ENCODE measurements at regions of chr6 and their contacts with region 1.

Region 1: DNA sequence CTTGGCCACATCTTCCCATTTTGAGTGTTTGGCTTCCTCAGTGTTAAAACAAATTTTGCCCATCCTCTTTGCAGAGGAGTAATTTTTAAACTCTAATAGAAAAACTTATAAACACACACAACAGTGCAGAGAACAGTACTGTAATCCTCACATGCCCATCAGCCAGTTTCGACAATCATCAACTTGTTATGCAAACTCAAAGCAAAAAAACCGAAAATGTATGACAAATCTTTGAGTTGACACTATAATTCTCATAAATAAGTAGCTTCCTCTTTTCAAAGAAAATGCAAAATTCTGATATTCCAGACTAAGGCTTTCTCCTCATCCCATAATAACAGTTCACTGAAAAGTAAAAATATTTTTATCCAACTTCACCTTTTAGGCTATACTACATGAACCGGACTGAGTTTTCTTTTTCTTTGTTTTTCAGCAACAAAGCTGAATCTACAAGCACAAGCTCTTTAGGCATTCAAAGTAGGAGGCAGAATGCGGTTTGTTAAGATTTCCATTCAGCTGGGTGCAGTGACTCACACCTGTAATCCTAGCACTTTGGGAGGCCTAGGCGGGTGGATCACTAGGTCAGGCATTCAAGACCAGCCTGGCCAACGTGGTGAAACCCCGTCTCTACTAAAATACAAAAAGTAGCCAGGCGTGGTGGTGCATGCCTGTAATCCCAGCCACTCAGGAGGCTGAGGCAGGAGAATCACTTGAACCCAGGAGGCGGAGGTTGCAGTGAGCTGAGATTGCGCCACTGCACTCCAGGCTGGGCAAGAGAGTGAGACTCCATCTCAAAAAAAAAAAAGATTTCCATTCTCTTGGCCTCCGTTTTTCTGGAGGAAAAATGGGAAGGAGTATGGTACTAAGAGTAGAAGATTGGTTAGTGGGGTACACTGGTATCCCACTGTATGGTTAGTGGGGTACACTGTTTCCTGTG is 74.8 kb downstream of the GCNT2 start:
- DNase-seq: peak; percentile 74 to 90 (median 88)
- H3K4me3 ChIP-seq: no peak overlapping the region
- H3K4me3 Mint-ChIP-seq: peak overlapping the region in 1 of 2 donors; percentile 53
- H3K27ac ChIP-seq: peak overlapping the region; percentile 86 to 88
- H3K27ac Mint-ChIP-seq: peak overlapping the region; percentile 93 to 99 (median 97)
- H3K4me1 ChIP-seq: peaks cover 54 to 70% of the 10 kb centered on the region in 2 donors
- H3K4me1 Mint-ChIP-seq: peaks cover 63% of the 10 kb centered on the region
- H3K27me3 ChIP-seq: no peaks in the 10 kb centered on the region
- H3K27me3 Mint-ChIP-seq: peaks cover 0 to 1% (median 0%) of the 10 kb centered on the region in 3 donors
- CTCF ChIP-seq: no peak

Region 2: DNA sequence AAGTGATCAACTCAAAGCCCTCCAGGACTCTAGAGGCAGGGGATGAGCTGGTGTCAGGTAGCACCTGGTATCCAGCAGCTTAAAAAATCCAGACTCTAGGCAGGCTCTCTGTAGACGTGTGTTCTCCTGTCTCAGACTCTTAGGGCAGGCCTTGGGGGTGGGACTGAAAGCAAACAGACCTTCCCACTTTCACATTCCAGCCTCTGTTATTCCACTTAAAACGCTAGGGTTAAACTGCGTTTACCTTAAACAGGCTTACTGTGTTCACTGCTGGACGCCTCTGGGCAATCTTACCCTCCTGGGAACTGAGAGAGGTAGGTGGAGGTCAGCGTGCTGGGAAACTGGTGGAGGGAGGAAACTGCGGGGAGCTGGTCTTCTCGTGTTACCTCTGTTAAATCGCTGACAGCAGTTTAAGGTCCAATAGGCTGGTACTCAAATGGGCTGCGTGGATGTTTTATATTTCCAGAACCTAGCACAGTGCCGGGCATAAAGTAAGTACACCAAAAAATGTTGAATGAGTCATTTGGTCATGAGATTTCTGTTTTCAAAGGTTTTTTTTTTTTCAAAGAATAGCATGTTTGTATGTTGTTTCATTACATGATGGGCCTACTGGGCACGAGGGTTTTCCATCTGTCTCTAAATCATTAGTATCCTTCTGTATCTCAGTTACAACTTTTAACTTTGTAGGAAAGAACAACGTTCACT is 74.7 kb before region 1 on chr6 and contains the start of gene GCNT2:
- intact Hi-C with region 1: loop called in 1 of 2 experiments (anchors 5 kb)
- DNase-seq: peak; percentile 32 to 69 (median 58)
- H3K4me3 ChIP-seq: peak within 1 kb of the TSS in 2 of 3 experiments; percentile 32 to 64
- H3K4me3 Mint-ChIP-seq: peak within 1 kb of the TSS; percentile 70 to 81
- H3K27ac ChIP-seq: peak within 1 kb of the TSS; percentile 81 to 84
- H3K27ac Mint-ChIP-seq: peak within 1 kb of the TSS; percentile 92 to 99 (median 94)
- H3K4me1 ChIP-seq: peaks cover 53 to 69% of the 10 kb centered on the region in 2 donors
- H3K4me1 Mint-ChIP-seq: peaks cover 58% of the 10 kb centered on the region
- H3K27me3 ChIP-seq: no peaks in the 10 kb centered on the region
- H3K27me3 Mint-ChIP-seq: peaks cover 0 to 2% (median 0%) of the 10 kb centered on the region in 3 donors
- CTCF ChIP-seq: no peak
- polyA plus RNA-seq, gene GCNT2: 3.5 to 10.0 (median 4.3) TPM

Region 3: DNA sequence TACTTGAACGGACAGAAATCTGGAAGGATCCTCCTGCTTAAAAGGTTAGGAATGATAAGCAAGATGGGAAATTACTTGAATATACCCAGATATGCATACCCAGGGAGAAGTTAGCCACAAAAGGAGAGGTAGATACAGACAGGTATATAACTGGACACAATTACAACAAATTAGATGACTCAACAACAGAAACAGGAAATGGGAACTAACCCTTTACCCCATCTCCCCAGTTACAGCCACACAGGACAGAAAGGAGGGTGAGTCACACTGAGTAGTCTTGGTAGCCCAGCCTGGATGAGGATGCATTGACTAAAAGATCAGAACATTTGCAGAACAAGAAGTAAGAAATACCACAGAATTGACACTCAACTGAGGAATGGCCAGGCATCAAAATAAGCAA is 37.2 kb after region 1 on chr6:
- intact Hi-C with region 1: loop called in 1 of 2 experiments (anchors 5 kb)
- DNase-seq: peak; percentile 88 to 97 (median 95)
- H3K4me3 ChIP-seq: no peak overlapping the region
- H3K4me3 Mint-ChIP-seq: no peak overlapping the region
- H3K27ac ChIP-seq: peak overlapping the region in 1 of 2 donors; percentile 73
- H3K27ac Mint-ChIP-seq: peak overlapping the region; percentile 16 to 86 (median 77)
- H3K4me1 ChIP-seq: peaks cover 23 to 27% of the 10 kb centered on the region in 2 donors
- H3K4me1 Mint-ChIP-seq: peaks cover 23% of the 10 kb centered on the region
- H3K27me3 ChIP-seq: no peaks in the 10 kb centered on the region
- H3K27me3 Mint-ChIP-seq: no peaks in the 10 kb centered on the region
- CTCF ChIP-seq: no peak

Region 4: DNA sequence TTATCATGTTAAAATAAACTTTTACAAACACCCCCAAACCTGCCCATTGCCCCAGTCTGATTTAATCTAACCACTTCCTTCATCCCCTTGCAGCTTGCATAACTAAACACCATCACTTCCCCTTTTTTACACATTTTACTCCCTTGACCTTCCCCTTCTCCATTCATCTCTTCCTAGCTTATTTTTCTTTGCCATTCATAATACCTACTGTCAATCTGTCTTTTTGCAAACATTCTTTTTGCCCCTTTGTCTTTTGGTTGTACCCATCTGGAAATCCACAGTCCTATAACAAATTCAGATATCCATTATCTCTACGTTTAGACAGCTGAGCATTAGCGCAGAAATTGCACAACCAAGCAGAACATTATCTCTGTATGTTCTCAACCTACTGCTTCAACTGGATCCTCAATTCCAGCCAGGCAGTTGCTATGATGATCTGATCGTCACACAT is 47.2 kb after region 1 on chr6:
- intact Hi-C with region 1: no loop called
- DNase-seq: peak; percentile 67 to 80 (median 79)
- H3K4me3 ChIP-seq: peak overlapping the region in 2 of 3 experiments; percentile 9 to 57
- H3K4me3 Mint-ChIP-seq: peak overlapping the region in 1 of 2 donors; percentile 77
- H3K27ac ChIP-seq: peak overlapping the region in 1 of 2 donors; percentile 60
- H3K27ac Mint-ChIP-seq: peak overlapping the region; percentile 58 to 92 (median 87)
- H3K4me1 ChIP-seq: peaks cover 34 to 35% of the 10 kb centered on the region in 2 donors
- H3K4me1 Mint-ChIP-seq: peaks cover 40% of the 10 kb centered on the region
- H3K27me3 ChIP-seq: no peaks in the 10 kb centered on the region
- H3K27me3 Mint-ChIP-seq: peaks cover 0 to 2% (median 2%) of the 10 kb centered on the region in 3 donors
- CTCF ChIP-seq: no peak

Measured in CD14-positive monocyte (primary cell).